ENCODE measurements at regions of chr16 and their contacts with region 1.

Region 1: GRCh38 chr16:58124601-58124915 is 4.6 kb downstream of the CFAP20 start:
- DNase-seq: no peak
- ATAC-seq: no peak
- H3K4me3 ChIP-seq: no peak overlapping the region
- H3K27ac ChIP-seq: no peak overlapping the region
- H3K4me1 ChIP-seq: peaks cover 54% of the 10 kb centered on the region
- H3K27me3 ChIP-seq: no peaks in the 10 kb centered on the region
- CTCF ChIP-seq: no peak

Region 2: DNA sequence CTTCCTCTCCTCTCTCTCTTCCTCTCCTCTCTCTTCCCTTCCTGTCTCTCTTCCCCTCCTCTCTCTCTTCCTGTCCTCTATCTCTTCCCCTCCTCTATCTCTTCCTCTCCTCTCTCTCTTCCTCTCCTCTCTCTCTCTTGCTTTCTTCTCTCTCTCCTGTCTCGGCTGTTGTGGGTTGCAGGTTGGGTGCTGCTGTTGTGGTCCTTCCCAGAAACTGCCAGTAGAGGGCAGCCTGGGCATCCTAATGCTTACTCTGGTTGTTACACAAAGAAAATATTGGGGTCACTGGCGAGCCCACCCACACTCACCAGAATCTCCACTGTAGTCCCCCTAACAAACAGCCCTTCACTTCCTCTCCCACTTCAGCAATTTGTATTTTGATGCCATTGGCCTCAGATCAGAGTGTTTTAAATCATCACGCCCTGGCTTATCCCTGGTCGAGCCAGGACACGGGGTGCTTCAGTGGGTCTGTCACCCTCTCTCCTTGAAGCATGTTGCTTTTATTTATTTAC is 103.9 kb before region 1 on chr16:
- intact Hi-C with region 1: loop called (anchors 5 kb)
- DNase-seq: peak; percentile 70
- ATAC-seq: peak; percentile 6
- H3K4me3 ChIP-seq: no peak overlapping the region
- H3K27ac ChIP-seq: no peak overlapping the region
- H3K4me1 ChIP-seq: peaks cover 32% of the 10 kb centered on the region
- H3K27me3 ChIP-seq: no peaks in the 10 kb centered on the region
- CTCF ChIP-seq: peak; percentile 79

Measured in upper lobe of right lung (tissue), 1 donor.